Vagina (tissue), 2 donors: ENCODE measurements at regions of chr6 and their contacts with region 1.

Region 1: DNA sequence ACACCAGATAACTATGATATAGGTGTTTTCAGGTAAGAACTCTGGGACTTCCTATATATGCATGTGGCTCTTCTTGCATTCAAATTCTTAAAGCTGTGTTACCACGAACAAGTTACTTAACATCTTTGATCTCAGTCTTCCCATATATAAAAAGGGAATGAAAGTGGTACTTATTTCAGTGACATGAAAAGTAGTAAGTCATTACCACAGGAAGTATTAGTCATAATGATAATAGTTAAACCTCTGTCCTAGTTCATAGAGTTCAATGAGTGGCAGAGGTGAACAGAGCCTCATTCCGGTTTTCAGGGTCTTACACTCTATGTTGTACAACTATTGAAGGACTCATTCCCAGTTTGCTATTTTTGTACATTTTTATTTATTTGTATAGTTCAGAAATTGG is 237.0 kb downstream of the NKAIN2 start:
- DNase-seq: no peak
- H3K4me3 ChIP-seq: no peak overlapping the region
- H3K27ac ChIP-seq: no peak overlapping the region
- H3K4me1 ChIP-seq: no peaks in the 10 kb centered on the region
- H3K27me3 ChIP-seq: no peaks in the 10 kb centered on the region
- CTCF ChIP-seq: no peak
- POLR2A ChIP-seq: no peak

Region 2: GRCh38 chr6:124573953-124574352 is 533.3 kb after region 1 on chr6:
- intact Hi-C with region 1: loop called (anchors 5 kb)
- DNase-seq: no peak
- H3K4me3 ChIP-seq: no peak overlapping the region
- H3K27ac ChIP-seq: no peak overlapping the region
- H3K4me1 ChIP-seq: no peaks in the 10 kb centered on the region
- H3K27me3 ChIP-seq: no peaks in the 10 kb centered on the region
- CTCF ChIP-seq: no peak
- POLR2A ChIP-seq: no peak